Ovary (tissue), 10 donors: ENCODE measurements at regions of chr3 and their contacts with region 1.

Region 1: GRCh38 chr3:178443634-178444033 is 92.6 kb upstream of the KCNMB2 start:
- DNase-seq: no peak
- H3K4me3 ChIP-seq: no peak overlapping the region
- H3K27ac ChIP-seq: no peak overlapping the region
- H3K4me1 ChIP-seq: no peaks in the 10 kb centered on the region
- H3K27me3 ChIP-seq: no peaks in the 10 kb centered on the region
- CTCF ChIP-seq: peak in 1 of 3 donors; percentile 26
- EP300 ChIP-seq: no peak
- POLR2A ChIP-seq: no peak

Region 2: GRCh38 chr3:178155521-178155920 is 288.1 kb before region 1 on chr3:
- intact Hi-C with region 1: no loop called
- DNase-seq: no peak
- H3K4me3 ChIP-seq: no peak overlapping the region
- H3K27ac ChIP-seq: no peak overlapping the region
- H3K4me1 ChIP-seq: no peaks in the 10 kb centered on the region
- H3K27me3 ChIP-seq: no peaks in the 10 kb centered on the region
- CTCF ChIP-seq: no peak
- EP300 ChIP-seq: no peak
- POLR2A ChIP-seq: no peak

Region 3: DNA sequence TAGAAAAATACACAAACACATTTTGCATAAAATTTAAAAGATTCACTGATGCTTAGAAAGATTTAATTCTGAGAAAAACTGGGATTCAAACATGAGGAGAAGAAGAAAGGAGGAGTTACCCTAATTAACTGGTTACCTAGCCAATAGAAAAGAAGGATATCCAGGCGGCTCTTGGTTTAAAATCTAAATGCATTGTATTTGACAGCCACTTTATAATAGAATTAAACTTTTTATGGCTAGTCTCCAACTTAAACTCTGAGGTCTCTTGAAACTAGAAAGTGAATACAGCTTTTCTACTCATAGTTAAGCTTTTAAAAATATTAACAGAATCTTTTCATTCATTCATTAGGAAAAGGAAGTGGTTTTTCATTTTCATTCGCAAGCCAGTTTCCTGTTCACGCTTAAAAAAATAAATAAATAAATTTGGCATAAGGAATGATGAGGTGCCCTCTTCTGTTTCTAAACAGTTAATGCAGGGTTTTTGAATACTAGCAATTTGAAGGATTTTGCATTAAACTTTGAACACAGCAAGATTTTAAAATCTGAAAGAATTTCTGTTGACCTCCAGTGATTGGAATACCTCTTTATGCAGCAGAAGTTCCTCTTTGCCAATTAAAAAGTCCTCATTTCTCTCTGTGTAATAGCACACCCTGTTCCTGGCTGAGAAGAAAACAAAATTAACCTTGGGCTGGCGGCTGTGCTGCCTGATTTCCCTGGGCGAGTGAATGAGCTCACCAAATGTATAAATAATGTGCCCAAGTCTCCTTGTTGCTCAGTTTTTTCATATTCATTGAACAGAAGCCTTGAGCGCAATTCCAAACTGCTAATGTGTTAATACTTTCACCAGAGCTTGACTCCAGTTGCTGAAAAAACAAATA is 522.9 kb after region 1 on chr3:
- intact Hi-C with region 1: loop called (anchors 5 to 10 kb)
- DNase-seq: peak in 4 of 5 donors; percentile 11 to 61 (median 32)
- H3K4me3 ChIP-seq: no peak overlapping the region
- H3K27ac ChIP-seq: no peak overlapping the region
- H3K4me1 ChIP-seq: peaks cover 5% of the 10 kb centered on the region
- H3K27me3 ChIP-seq: no peaks in the 10 kb centered on the region
- CTCF ChIP-seq: peak in 1 of 3 donors; percentile 38
- EP300 ChIP-seq: no peak
- POLR2A ChIP-seq: no peak

Region 4: GRCh38 chr3:178971614-178972013 is 528.0 kb after region 1 on chr3:
- intact Hi-C with region 1: loop called (anchors 5 to 10 kb)
- DNase-seq: no peak
- H3K4me3 ChIP-seq: no peak overlapping the region
- H3K27ac ChIP-seq: no peak overlapping the region
- H3K4me1 ChIP-seq: peaks cover 1% of the 10 kb centered on the region
- H3K27me3 ChIP-seq: no peaks in the 10 kb centered on the region
- CTCF ChIP-seq: no peak
- EP300 ChIP-seq: no peak
- POLR2A ChIP-seq: no peak